Adrenal gland (tissue), 19 donors: ENCODE measurements at regions of chr5 and their contacts with region 1.

Region 1: DNA sequence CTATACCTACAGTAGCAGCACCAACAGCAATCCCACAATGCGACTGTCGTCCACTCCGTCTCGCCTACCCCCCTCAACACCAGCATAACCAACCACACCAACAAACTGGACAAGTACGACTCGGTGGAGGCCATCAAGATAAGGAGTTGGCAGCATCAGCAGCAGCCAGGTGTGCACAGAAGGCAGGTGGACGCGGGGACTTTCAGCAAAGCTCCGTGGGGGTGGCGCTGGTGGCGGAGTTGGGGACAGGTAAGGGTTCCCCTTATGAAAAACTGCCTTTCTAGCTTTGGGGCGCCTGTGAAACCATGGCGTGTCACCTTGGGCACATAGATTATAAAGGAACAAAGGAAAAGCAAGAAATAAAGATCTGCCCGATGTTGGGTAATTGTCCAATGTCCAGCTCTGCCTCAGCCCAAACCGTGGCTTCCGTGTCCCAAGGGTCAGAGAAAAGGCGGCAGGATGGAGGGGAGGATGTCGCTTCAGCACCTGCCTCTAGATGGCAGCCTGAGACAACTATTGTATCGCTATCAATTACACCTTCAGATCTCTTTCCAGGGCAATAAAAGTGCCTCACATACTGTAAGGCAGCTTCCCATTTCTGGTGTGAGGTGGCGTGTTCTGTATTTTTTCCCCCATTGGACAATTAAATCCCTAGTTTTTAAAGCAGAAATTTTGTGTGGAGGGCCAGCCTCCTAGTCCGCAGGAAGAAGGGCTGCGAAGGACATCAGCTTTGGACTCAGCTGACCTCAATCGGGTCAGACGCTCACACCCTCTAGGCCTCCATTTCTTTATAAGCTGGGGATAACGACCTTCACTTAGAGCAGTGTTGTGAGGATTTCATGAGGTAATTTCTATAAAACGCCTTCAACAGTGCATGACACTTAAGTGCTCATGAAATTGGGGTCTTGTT is 58.8 kb downstream of the MTRR start:
- DNase-seq: peak; percentile 24 to 78 (median 56)
- H3K4me3 ChIP-seq: no peak overlapping the region
- H3K27ac ChIP-seq: no peak overlapping the region
- H3K4me1 ChIP-seq: no peaks in the 10 kb centered on the region
- H3K27me3 ChIP-seq: peaks cover 3% of the 10 kb centered on the region
- CTCF ChIP-seq: peak; percentile 51 to 77 (median 65)
- POLR2A ChIP-seq: no peak

Region 2: DNA sequence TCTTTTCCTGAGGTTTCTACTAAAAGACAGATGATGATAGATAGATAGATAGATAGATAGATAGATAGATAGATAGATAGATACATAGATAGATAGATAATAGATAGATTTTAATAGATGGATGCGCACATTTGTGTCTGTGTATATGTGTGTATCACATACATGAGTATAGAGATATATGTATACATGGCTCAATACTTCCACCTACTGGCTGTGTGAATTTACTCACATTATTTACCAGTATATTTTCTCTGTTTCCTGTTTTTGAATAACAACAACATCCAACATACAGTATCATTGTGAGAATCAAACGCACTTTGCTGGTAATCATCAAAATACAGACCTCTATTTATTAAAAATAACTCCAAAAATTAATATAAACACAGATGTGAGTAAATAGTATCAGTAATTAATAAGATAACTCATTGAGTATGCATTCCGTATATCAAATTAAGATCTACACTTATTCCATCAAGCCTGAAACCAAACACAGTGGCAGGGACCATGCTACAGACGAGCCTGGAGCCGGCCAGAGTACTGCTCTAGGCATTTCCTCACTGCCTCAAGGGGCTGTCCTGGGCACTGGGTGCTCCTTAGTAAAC is 1280.2 kb after region 1 on chr5:
- intact Hi-C with region 1: loop called in 1 of 2 experiments (anchors 5 kb)
- DNase-seq: no peak
- H3K4me3 ChIP-seq: no peak overlapping the region
- H3K27ac ChIP-seq: no peak overlapping the region
- H3K4me1 ChIP-seq: no peaks in the 10 kb centered on the region
- H3K27me3 ChIP-seq: no peaks in the 10 kb centered on the region
- CTCF ChIP-seq: peak; percentile 33 to 65 (median 54)
- POLR2A ChIP-seq: no peak